Dendritic cell treated with granulocyte-macrophage colony-stimulating factor and Interleukin-4, amounts not matched to agents 40 ng/mL and 50 ng/mL, for 4 days (primary cell): ENCODE measurements at regions of chr16 and their contacts with region 1.

Region 1: GRCh38 chr16:8581831-8582580 is 8.3 kb downstream of the TMEM114 start:
- H3K4me3 Mint-ChIP-seq: no peak overlapping the region
- H3K27ac Mint-ChIP-seq: peak overlapping the region; percentile 78
- H3K4me1 Mint-ChIP-seq: peaks cover 16% of the 10 kb centered on the region
- H3K27me3 Mint-ChIP-seq: peaks cover 44% of the 10 kb centered on the region

Region 2: DNA sequence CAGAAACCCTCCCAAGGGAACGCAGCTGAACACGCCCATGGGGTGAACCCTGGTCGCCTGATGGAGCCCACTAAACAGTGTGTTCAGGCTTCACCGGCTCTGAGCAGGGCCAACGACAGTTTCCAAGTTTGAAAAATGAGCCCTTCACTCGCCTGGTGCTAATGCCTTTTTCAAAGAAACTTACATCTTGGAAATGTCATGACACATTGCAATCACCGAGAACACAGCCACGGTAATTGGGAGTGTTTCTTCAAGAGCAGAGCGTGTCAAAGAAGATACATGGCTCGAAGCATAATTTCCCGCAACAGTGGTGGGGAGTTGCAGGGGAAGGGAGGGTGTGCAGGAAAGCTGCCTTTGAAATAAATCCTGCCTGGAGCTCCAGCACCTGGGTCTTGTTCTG is 454.9 kb before region 1 on chr16:
- intact Hi-C with region 1: no loop called
- H3K4me3 Mint-ChIP-seq: no peak overlapping the region
- H3K27ac Mint-ChIP-seq: no peak overlapping the region
- H3K4me1 Mint-ChIP-seq: no peaks in the 10 kb centered on the region
- H3K27me3 Mint-ChIP-seq: no peaks in the 10 kb centered on the region

Region 3: GRCh38 chr16:8634991-8635736 is 53.2 kb after region 1 on chr16:
- intact Hi-C with region 1: loop called (anchors 5 kb)
- H3K4me3 Mint-ChIP-seq: no peak overlapping the region
- H3K27ac Mint-ChIP-seq: peak overlapping the region; percentile 73
- H3K4me1 Mint-ChIP-seq: peaks cover 41% of the 10 kb centered on the region
- H3K27me3 Mint-ChIP-seq: no peaks in the 10 kb centered on the region

Region 4: GRCh38 chr16:8958344-8959167 is 376.6 kb after region 1 on chr16:
- intact Hi-C with region 1: no loop called
- H3K4me3 Mint-ChIP-seq: peak overlapping the region; percentile 39
- H3K27ac Mint-ChIP-seq: peak overlapping the region; percentile 81
- H3K4me1 Mint-ChIP-seq: peaks cover 75% of the 10 kb centered on the region
- H3K27me3 Mint-ChIP-seq: no peaks in the 10 kb centered on the region